Naive thymus-derived CD4-positive, alpha-beta T cell (primary cell): ENCODE measurements at regions of chr16 and their contacts with region 1.

Region 1: DNA sequence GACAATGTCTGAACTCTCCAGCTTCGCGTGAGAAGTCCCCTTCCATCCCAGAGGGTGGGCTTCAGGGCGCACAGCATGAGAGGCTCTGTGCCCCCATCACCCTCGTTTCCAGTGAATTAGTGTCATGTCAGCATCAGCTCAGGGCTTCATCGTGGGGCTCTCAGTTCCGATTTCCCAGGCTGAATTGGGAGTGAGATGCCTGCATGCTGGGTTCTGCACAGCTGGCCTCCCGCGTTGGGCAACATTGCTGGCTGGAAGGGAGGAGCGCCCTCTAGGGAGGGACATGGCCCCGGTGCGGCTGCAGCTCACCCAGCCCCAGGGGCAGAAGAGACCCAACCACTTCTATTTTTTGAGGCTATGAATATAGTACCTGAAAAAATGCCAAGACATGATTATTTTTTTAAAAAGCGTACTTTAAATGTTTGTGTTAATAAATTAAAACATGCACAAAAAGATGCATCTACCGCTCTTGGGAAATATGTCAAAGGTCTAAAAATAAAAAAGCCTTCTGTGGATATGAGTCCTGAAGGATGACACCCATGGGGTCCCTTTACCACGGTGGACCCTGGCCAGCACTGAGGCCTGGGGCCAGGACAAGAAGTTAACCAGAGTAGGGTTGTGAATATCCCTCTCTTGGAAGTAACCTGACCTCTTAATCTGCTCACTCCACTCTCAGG is 10.5 kb upstream of the ITGAD start:
- DNase-seq: peak; percentile 24 to 75 (median 47)
- ATAC-seq: peak; percentile 82
- H3K4me3 ChIP-seq: no peak overlapping the region
- H3K4me3 Mint-ChIP-seq: no peak overlapping the region
- H3K27ac ChIP-seq: no peak overlapping the region
- H3K27ac Mint-ChIP-seq: peak overlapping the region in 1 of 9 donors; percentile 22
- H3K4me1 ChIP-seq: peaks cover 0 to 3% of the 10 kb centered on the region in 2 donors
- H3K4me1 Mint-ChIP-seq: peaks cover 0 to 23% (median 4%) of the 10 kb centered on the region in 7 donors
- H3K27me3 ChIP-seq: peaks cover 0 to 4% of the 10 kb centered on the region in 2 donors
- H3K27me3 Mint-ChIP-seq: peaks cover 0 to 8% (median 4%) of the 10 kb centered on the region in 5 donors

Region 2: DNA sequence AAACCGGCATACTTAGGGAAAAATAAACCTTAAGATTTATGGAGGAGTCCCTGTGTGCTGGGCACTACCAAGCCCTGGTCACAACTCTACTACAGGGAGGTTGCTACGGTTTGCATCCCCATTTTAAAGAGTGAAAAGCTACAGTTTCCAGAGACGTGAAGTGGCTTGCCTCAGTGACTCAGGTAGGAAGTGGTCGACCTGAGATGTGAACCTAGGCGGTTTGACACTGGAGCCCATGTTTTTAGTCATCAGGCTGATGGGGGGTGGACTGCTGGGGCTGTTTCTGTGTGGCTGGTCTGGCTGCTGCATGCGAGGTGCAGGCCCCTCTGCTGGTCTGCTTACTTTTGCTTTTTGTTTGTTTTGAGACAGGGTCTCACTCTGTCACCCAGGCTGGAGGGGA is 39.0 kb after region 1 on chr16:
- CTCF ChIA-PET with region 1: no interaction called
- POLR2A ChIA-PET with region 1: no interaction called
- intact Hi-C with region 1: loop called in 1 of 2 experiments (anchors 5 kb)
- DNase-seq: peak in 1 of 9 donors; percentile 64
- ATAC-seq: peak; percentile 53
- H3K4me3 ChIP-seq: no peak overlapping the region
- H3K4me3 Mint-ChIP-seq: peak overlapping the region in 1 of 10 donors; percentile 64
- H3K27ac ChIP-seq: no peak overlapping the region
- H3K27ac Mint-ChIP-seq: peak overlapping the region in 2 of 9 donors; percentile 14 to 83
- H3K4me1 ChIP-seq: peaks cover 0 to 45% of the 10 kb centered on the region in 2 donors
- H3K4me1 Mint-ChIP-seq: peaks cover 3 to 45% (median 5%) of the 10 kb centered on the region in 7 donors
- H3K27me3 ChIP-seq: no peaks in the 10 kb centered on the region
- H3K27me3 Mint-ChIP-seq: peaks cover 0 to 12% (median 0%) of the 10 kb centered on the region in 5 donors

Region 3: GRCh38 chr16:31502981-31503380 is 120.4 kb after region 1 on chr16:
- CTCF ChIA-PET with region 1: no interaction called
- POLR2A ChIA-PET with region 1: no interaction called
- intact Hi-C with region 1: no loop called
- DNase-seq: no peak
- ATAC-seq: no peak
- H3K4me3 ChIP-seq: no peak overlapping the region
- H3K4me3 Mint-ChIP-seq: no peak overlapping the region
- H3K27ac ChIP-seq: no peak overlapping the region
- H3K27ac Mint-ChIP-seq: peak overlapping the region in 1 of 9 donors; percentile 22
- H3K4me1 ChIP-seq: peaks cover 10% of the 10 kb centered on the region in 2 donors
- H3K4me1 Mint-ChIP-seq: peaks cover 18 to 51% (median 38%) of the 10 kb centered on the region in 7 donors
- H3K27me3 ChIP-seq: no peaks in the 10 kb centered on the region
- H3K27me3 Mint-ChIP-seq: no peaks in the 10 kb centered on the region